ENCODE measurements at regions of chr15 and their contacts with region 1.

Region 1: GRCh38 chr15:83268147-83268546 is 16.3 kb downstream of the BNC1 start:
- DNase-seq: no peak
- H3K4me3 Mint-ChIP-seq: no peak overlapping the region
- H3K27ac Mint-ChIP-seq: no peak overlapping the region
- H3K4me1 Mint-ChIP-seq: no peaks in the 10 kb centered on the region
- H3K27me3 Mint-ChIP-seq: peaks cover 55% of the 10 kb centered on the region
- CTCF ChIP-seq: no peak

Region 2: GRCh38 chr15:83108266-83109226 is 159.6 kb before region 1 on chr15:
- CTCF ChIA-PET with region 1: no interaction called
- intact Hi-C with region 1: no loop called
- DNase-seq: peak; percentile 14
- H3K4me3 Mint-ChIP-seq: no peak overlapping the region
- H3K27ac Mint-ChIP-seq: no peak overlapping the region
- H3K4me1 Mint-ChIP-seq: peaks cover 11% of the 10 kb centered on the region
- H3K27me3 Mint-ChIP-seq: peaks cover 34% of the 10 kb centered on the region
- CTCF ChIP-seq: no peak

Region 3: GRCh38 chr15:83305704-83306291 is 37.7 kb after region 1 on chr15:
- CTCF ChIA-PET with region 1: no interaction called
- intact Hi-C with region 1: loop called (anchors 5 kb)
- DNase-seq: peak; percentile 28
- H3K4me3 Mint-ChIP-seq: no peak overlapping the region
- H3K27ac Mint-ChIP-seq: no peak overlapping the region
- H3K4me1 Mint-ChIP-seq: peaks cover 17% of the 10 kb centered on the region
- H3K27me3 Mint-ChIP-seq: peaks cover 9% of the 10 kb centered on the region
- CTCF ChIP-seq: no peak

Measured in Calu3 (cell line).